ENCODE measurements at regions of chr1 and their contacts with region 1.

Region 1: DNA sequence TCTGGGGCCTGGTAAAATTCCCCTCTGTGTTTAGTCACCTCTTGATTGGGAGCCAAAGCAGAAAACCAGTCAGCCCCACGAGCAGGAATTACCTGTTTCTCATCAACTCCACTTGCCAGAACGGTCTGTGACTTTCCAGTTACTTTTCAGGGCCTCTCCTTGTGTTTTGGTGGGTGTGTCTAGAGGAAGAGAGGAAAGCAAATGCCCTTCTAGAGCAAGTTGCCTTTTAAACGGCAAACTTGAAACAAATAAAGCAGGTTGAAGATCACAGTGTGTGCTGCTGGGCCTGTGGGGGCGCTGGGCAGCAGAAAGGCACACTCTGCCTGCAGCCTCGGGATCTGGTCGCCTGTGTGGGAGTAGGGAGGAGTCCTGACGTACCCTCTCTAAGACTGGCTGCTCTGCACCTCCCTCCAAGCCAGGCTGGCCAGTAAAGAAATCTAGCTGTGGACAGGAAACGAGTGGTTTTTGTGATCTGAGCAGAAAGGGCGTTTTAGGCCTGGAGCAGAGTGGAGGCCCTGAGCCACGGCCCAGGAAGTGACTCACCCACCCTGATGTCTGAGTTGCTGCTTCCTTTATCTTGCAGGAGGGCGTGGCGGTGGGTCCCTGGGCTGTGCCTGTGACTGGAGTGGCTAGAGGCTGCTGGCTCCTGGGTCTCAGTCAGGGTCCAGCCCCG is 11.1 kb upstream of the S100A11 start:
- DNase-seq: peak; percentile 96
- H3K4me3 Mint-ChIP-seq: peak overlapping the region; percentile 48
- H3K27ac Mint-ChIP-seq: peak overlapping the region; percentile 84
- H3K4me1 Mint-ChIP-seq: peaks cover 41% of the 10 kb centered on the region
- H3K27me3 Mint-ChIP-seq: peaks cover 4% of the 10 kb centered on the region
- CTCF ChIP-seq: no peak

Region 2: GRCh38 chr1:152127670-152128069 is 79.8 kb after region 1 on chr1:
- CTCF ChIA-PET with region 1: no interaction called
- intact Hi-C with region 1: no loop called
- DNase-seq: no peak
- H3K4me3 Mint-ChIP-seq: no peak overlapping the region
- H3K27ac Mint-ChIP-seq: no peak overlapping the region
- H3K4me1 Mint-ChIP-seq: no peaks in the 10 kb centered on the region
- H3K27me3 Mint-ChIP-seq: peaks cover 93% of the 10 kb centered on the region
- CTCF ChIP-seq: no peak

Region 3: DNA sequence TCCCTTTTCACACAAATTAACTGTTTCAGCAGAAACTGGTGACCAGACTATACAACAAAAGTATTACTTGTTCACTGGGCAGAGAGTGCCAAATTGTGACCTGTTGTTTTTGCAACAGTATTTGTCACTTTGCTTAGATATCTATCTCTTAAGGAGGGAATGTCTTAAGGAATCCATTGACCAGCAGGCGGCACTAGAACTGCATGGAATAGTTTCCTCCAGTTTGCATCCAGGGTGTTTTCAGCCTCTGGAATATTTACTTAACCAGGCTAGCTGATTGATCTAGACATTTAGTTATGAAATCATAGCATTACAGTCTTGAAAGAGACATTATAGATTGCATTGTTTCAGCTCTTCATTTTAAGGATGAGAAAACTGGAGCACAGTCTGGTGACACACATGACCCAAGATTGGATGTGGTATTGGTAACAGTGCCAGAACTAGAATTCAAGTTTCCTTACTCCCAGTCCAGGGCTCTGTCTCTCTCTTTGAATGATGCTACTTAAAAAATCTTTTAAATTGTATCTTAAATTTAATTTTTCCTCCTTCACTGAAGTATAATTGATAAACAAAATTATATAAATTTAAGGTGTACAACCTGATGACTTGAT is 94.2 kb after region 1 on chr1:
- CTCF ChIA-PET with region 1: no interaction called
- intact Hi-C with region 1: loop called (anchors 1 kb)
- DNase-seq: peak; percentile 69
- H3K4me3 Mint-ChIP-seq: no peak overlapping the region
- H3K27ac Mint-ChIP-seq: no peak overlapping the region
- H3K4me1 Mint-ChIP-seq: no peaks in the 10 kb centered on the region
- H3K27me3 Mint-ChIP-seq: peaks cover 78% of the 10 kb centered on the region
- CTCF ChIP-seq: peak; percentile 80

Measured in Calu3 (cell line).